ENCODE measurements at regions of chr10 and their contacts with region 1.

Region 1: GRCh38 chr10:104895541-104895940 is 254.5 kb downstream of the SORCS3 start:
- DNase-seq: no peak
- ATAC-seq: no peak
- H3K4me3 ChIP-seq: no peak overlapping the region
- H3K4me3 Mint-ChIP-seq: no peak overlapping the region
- H3K27ac ChIP-seq: no peak overlapping the region
- H3K27ac Mint-ChIP-seq: no peak overlapping the region
- H3K4me1 ChIP-seq: no peaks in the 10 kb centered on the region
- H3K4me1 Mint-ChIP-seq: no peaks in the 10 kb centered on the region
- H3K27me3 ChIP-seq: no peaks in the 10 kb centered on the region
- H3K27me3 Mint-ChIP-seq: peaks cover 2% of the 10 kb centered on the region
- CTCF ChIP-seq: no peak

Region 2: GRCh38 chr10:104880624-104881398 is 14.7 kb before region 1 on chr10:
- CTCF ChIA-PET with region 1: no interaction called
- POLR2A ChIA-PET with region 1: no interaction called
- intact Hi-C with region 1: no loop called
- DNase-seq: no peak
- ATAC-seq: no peak
- H3K4me3 ChIP-seq: no peak overlapping the region
- H3K4me3 Mint-ChIP-seq: no peak overlapping the region
- H3K27ac ChIP-seq: no peak overlapping the region
- H3K27ac Mint-ChIP-seq: no peak overlapping the region
- H3K4me1 ChIP-seq: no peaks in the 10 kb centered on the region
- H3K4me1 Mint-ChIP-seq: no peaks in the 10 kb centered on the region
- H3K27me3 ChIP-seq: no peaks in the 10 kb centered on the region
- H3K27me3 Mint-ChIP-seq: peaks cover 10% of the 10 kb centered on the region
- CTCF ChIP-seq: no peak

Region 3: GRCh38 chr10:104941662-104942061 is 46.1 kb after region 1 on chr10:
- CTCF ChIA-PET with region 1: no interaction called
- POLR2A ChIA-PET with region 1: no interaction called
- intact Hi-C with region 1: loop called in 1 of 2 experiments (anchors 2 kb)
- DNase-seq: no peak
- ATAC-seq: no peak
- H3K4me3 ChIP-seq: no peak overlapping the region
- H3K4me3 Mint-ChIP-seq: no peak overlapping the region
- H3K27ac ChIP-seq: no peak overlapping the region
- H3K27ac Mint-ChIP-seq: no peak overlapping the region
- H3K4me1 ChIP-seq: peaks cover 1% of the 10 kb centered on the region
- H3K4me1 Mint-ChIP-seq: peaks cover 2% of the 10 kb centered on the region
- H3K27me3 ChIP-seq: no peaks in the 10 kb centered on the region
- H3K27me3 Mint-ChIP-seq: no peaks in the 10 kb centered on the region
- CTCF ChIP-seq: no peak